Posterior vena cava (tissue), 2 donors: ENCODE measurements at regions of chrX and their contacts with region 1.

Region 1: DNA sequence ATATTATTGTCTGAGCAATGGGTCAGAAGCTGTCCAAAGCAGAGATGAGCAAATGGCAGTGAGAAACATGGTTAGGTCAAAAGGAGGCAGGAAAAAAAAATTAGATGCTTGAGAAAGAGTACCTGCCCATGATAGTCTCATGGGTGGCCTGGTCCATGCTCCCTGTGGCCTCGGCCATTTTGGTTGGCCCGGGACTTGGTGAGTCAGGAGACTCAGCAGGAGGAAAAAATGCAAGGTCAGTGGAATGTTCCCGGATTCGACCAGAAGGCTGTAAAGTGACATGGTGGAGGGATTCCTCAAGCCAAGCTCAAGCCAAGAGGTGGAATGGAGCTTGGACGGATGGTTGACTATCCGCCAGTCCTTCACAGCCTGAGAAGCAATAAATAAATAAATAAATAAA is 236.7 kb downstream of the ASMT start:
- DNase-seq: no peak

Region 2: GRCh38 chrX:1833656-1834360 is 17.7 kb before region 1 on chrX:
- intact Hi-C with region 1: no loop called
- DNase-seq: no peak

Region 3: GRCh38 chrX:2689773-2690666 is 838.5 kb after region 1 on chrX:
- intact Hi-C with region 1: loop called in 1 of 2 experiments (anchors 5 kb)
- DNase-seq: peak; percentile 78